ENCODE measurements at regions of chr6 and their contacts with region 1.

Region 1: GRCh38 chr6:2900821-2901644 is 2.1 kb downstream of the SERPINB9 start:
- DNase-seq: no peak
- ATAC-seq: no peak
- H3K4me3 Mint-ChIP-seq: peak overlapping the region; percentile 98
- H3K27ac Mint-ChIP-seq: peak overlapping the region; percentile 93
- H3K4me1 Mint-ChIP-seq: peaks cover 61% of the 10 kb centered on the region
- H3K27me3 Mint-ChIP-seq: no peaks in the 10 kb centered on the region
- CTCF ChIP-seq: no peak

Region 2: DNA sequence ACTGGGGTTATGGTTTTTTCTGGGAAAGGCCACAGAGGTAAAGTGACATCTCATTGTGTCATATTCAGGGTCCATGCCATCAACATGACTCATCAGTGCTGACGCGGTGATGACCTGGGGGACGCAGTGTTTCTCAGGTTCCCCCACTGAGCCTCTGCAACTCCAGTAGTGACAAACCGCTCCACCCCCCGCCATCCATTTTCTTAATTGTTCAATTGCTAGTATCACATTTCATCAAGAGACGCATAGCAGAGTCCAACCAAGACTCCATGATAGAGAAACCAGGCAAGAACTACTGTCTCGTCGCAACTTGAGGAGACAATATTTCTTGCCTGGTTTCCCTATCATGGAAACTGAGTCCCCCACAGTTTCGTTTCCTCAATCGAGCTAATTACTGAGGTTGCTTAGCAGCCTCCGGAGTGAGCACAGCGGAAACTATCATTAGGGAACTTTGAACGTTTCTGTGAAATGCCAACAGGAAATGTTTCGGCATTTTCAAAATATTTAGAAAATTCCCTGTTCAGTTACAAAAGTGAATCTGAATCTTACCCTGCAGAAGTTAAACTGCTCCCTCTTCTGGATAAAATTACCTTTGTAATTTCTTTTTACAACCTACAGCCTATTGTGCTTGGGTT is 47.2 kb before region 1 on chr6:
- CTCF ChIA-PET with region 1: interaction called, 5 read pairs
- POLR2A ChIA-PET with region 1: interaction called, 139 read pairs
- intact Hi-C with region 1: loop called (anchors 1 kb)
- DNase-seq: no peak
- ATAC-seq: peak; percentile 42
- H3K4me3 Mint-ChIP-seq: peak overlapping the region; percentile 74
- H3K27ac Mint-ChIP-seq: peak overlapping the region; percentile 97
- H3K4me1 Mint-ChIP-seq: peaks cover 81% of the 10 kb centered on the region
- H3K27me3 Mint-ChIP-seq: no peaks in the 10 kb centered on the region
- CTCF ChIP-seq: no peak

Region 3: DNA sequence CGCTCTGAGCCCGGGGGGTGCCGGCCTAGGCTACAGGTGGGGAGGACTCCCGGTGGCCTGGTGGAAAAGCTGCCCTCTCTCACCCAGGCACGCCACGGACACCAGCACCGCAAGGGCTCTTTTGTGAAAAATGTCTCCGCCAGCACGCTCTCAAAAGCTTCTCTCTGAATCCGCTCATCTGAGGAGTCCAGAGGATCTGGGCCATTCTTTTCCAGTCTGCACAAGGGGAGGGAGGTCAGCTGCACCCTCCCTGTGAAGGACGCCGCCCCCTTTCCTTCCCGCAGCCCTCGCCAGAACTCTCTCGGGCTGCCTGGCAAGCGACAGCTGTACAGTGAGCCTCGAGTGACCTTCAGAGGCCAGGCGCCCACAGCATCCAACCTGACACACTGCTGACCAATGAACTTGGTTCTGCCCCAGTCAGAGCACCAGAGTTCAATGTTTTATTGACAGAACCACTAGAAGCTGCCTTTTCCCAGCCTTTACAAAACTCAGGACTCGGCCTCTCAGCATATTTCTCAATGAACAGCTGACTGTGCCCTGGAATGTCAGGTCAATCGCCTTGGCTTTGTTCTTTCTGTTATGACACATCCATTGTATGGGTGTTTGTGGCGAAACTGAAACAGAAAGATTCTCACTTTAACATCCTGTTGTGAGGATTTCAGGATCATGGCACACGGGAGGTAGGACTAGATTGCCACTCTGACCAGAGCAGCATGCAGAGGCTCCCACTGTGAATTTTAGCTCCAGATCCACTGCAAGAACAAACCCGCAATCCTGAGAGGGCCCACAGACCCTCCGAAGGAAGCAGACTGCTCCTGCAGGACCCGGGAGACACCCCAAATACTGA is 24.6 kb before region 1 on chr6:
- CTCF ChIA-PET with region 1: interaction called, 3 read pairs
- POLR2A ChIA-PET with region 1: interaction called, 21 read pairs
- intact Hi-C with region 1: loop called (anchors 1 kb)
- DNase-seq: no peak
- ATAC-seq: peak; percentile 23
- H3K4me3 Mint-ChIP-seq: peak overlapping the region; percentile 88
- H3K27ac Mint-ChIP-seq: peak overlapping the region; percentile 99
- H3K4me1 Mint-ChIP-seq: peaks cover 85% of the 10 kb centered on the region
- H3K27me3 Mint-ChIP-seq: no peaks in the 10 kb centered on the region
- CTCF ChIP-seq: no peak

Region 4: GRCh38 chr6:2911171-2911570 is 10.1 kb after region 1 on chr6:
- CTCF ChIA-PET with region 1: interaction called, 12 read pairs
- POLR2A ChIA-PET with region 1: interaction called, 36 read pairs
- intact Hi-C with region 1: loop called (anchors 1 kb)
- DNase-seq: no peak
- ATAC-seq: peak; percentile 80
- H3K4me3 Mint-ChIP-seq: peak overlapping the region; percentile 51
- H3K27ac Mint-ChIP-seq: peak overlapping the region; percentile 88
- H3K4me1 Mint-ChIP-seq: peaks cover 43% of the 10 kb centered on the region
- H3K27me3 Mint-ChIP-seq: no peaks in the 10 kb centered on the region
- CTCF ChIP-seq: no peak

Region 5: GRCh38 chr6:2940010-2940850 is 39.2 kb after region 1 on chr6:
- CTCF ChIA-PET with region 1: no interaction called
- POLR2A ChIA-PET with region 1: interaction called, 7 read pairs
- intact Hi-C with region 1: loop called (anchors 2 kb)
- DNase-seq: peak; percentile 39
- ATAC-seq: peak; percentile 81
- H3K4me3 Mint-ChIP-seq: peak overlapping the region; percentile 82
- H3K27ac Mint-ChIP-seq: peak overlapping the region; percentile 94
- H3K4me1 Mint-ChIP-seq: peaks cover 69% of the 10 kb centered on the region
- H3K27me3 Mint-ChIP-seq: no peaks in the 10 kb centered on the region
- CTCF ChIP-seq: no peak